ENCODE measurements at regions of chr22 and their contacts with region 1.

Region 1: GRCh38 chr22:36065775-36066559 is 37.3 kb upstream of the RBFOX2 start:
- DNase-seq: peak; percentile 73
- H3K4me3 Mint-ChIP-seq: peak overlapping the region; percentile 72
- H3K27ac Mint-ChIP-seq: peak overlapping the region; percentile 40
- H3K4me1 Mint-ChIP-seq: peaks cover 11% of the 10 kb centered on the region
- H3K27me3 Mint-ChIP-seq: peaks cover 6% of the 10 kb centered on the region

Region 2: DNA sequence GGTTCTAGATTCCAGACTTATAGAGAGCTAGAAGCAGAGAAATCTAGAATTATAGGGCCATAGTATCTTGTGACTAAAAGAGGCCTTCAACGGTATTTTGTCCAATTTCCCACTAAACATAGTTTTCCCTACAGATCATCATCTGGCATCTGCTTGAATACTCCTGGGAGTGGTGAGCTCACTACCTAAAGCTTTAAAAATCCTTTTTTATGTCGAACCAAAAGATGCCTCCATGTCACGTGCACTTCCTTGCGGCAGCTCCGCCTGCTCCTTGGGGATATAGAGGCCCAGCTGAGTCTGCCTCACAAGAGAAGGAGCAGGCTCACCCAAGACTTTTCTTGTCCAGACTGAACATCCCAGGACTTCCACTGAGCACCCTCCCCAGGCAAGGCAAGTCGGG is 444.5 kb before region 1 on chr22:
- CTCF ChIA-PET with region 1: no interaction called
- POLR2A ChIA-PET with region 1: no interaction called
- DNase-seq: no peak
- H3K4me3 Mint-ChIP-seq: no peak overlapping the region
- H3K27ac Mint-ChIP-seq: no peak overlapping the region
- H3K4me1 Mint-ChIP-seq: peaks cover 7% of the 10 kb centered on the region
- H3K27me3 Mint-ChIP-seq: peaks cover 16% of the 10 kb centered on the region

Region 3: DNA sequence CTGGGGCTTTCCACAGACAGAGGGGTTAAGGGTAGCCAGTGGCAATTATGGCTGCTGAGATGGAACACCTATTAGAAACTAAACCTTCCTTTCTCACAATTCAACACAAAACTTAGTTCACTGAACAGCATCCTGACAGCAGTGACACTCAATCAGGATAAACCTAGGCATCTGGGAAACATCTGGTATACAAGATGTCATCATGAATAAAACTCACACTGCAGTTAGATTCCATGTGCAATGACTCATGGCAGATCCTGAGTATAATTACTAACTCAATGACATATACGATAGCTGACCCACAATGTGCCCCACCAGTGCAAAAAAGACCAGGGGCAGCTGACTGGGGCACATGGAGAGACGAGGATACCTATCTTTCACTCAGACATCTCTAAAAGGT is 55.1 kb before region 1 on chr22:
- CTCF ChIA-PET with region 1: interaction called, 10 read pairs
- POLR2A ChIA-PET with region 1: no interaction called
- DNase-seq: no peak
- H3K4me3 Mint-ChIP-seq: no peak overlapping the region
- H3K27ac Mint-ChIP-seq: no peak overlapping the region
- H3K4me1 Mint-ChIP-seq: no peaks in the 10 kb centered on the region
- H3K27me3 Mint-ChIP-seq: peaks cover 18% of the 10 kb centered on the region

Region 4: DNA sequence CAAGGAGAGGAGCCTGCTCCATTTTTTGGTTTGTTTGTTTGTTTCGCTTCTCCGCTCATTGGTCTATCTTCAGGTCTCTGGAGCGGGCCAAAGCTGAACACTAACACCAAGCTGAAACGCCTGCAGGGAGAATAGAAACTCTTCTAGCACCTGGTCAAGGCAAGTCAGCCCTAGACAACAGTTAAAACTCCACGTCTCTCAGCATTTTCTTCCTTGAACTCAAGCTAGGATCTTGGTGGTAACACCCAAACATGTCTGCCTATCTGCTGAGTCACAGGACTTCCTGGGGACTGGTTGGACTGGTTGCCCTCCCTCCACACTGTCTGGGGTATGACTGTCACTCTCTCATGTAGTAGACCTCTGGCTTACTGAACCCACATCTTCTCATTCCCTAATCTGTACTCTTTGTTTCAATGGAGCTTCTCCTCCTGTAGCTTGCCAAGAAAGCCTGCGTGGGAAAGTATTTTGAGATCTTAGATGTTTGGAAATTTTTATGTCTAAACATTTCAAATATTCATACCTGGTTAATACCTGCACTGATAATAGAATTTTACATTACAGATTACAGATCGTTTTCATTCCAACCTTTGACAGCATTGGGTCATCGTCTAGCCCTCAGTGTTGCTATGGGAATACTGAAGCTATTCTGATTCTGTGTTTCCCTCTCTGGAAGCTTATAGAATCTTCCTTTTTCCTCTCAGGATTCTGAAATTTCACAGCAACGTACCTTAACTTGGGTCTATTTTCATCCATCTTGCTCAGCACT is 13.3 kb before region 1 on chr22:
- CTCF ChIA-PET with region 1: interaction called, 44 read pairs
- POLR2A ChIA-PET with region 1: interaction called, 3 read pairs
- DNase-seq: no peak
- H3K4me3 Mint-ChIP-seq: no peak overlapping the region
- H3K27ac Mint-ChIP-seq: no peak overlapping the region
- H3K4me1 Mint-ChIP-seq: peaks cover 8% of the 10 kb centered on the region
- H3K27me3 Mint-ChIP-seq: peaks cover 12% of the 10 kb centered on the region

Region 5: GRCh38 chr22:36088292-36088691 is 22.3 kb after region 1 on chr22:
- CTCF ChIA-PET with region 1: interaction called, 15 read pairs
- POLR2A ChIA-PET with region 1: no interaction called
- DNase-seq: no peak
- H3K4me3 Mint-ChIP-seq: no peak overlapping the region
- H3K27ac Mint-ChIP-seq: no peak overlapping the region
- H3K4me1 Mint-ChIP-seq: peaks cover 3% of the 10 kb centered on the region
- H3K27me3 Mint-ChIP-seq: no peaks in the 10 kb centered on the region

Region 6: DNA sequence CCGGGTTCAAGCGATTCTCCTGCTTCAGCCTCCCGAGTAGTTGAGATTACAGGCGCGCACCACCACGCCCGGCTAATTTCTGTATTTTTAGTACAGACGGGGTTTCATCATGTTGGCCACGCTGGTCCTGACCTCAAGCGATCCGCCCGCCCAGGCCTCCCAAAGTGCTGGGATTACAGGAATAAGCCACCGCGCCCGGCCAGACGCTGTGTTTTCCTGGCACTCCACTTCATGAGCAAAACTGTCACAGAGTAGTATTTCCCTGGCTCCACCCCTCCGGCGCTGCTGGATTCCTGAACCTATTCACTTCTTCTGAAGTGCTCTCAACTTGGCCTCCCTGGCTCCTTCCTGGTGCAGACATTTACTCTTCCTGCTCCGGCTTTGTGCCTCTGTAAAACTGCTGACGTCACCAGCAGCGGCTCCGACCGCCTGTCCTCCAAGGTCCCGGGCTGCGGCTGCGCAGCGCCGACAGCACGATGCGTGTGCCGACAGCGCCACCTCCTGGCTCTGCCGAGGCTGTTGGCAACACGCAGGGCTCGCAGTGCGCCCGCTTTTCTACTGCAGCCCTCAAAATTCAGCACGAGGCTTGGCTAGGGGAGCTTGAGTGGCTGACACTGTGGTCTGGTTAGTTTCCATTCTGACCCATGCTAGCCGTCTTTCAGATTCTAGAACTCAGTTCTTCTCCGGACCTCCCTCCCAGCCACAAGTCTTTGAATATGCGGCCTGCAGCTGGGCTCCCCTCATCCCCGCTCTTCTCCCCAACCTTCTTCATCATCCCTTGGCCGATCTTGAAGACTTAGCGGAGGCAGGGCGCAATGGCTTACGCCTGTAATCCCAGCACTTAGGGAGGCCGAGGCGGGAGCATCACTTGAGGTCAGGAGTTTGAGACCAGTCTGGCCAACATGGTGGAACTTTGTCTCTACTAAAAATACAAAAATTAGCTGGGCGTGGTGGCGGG is 58.0 kb after region 1 on chr22:
- CTCF ChIA-PET with region 1: interaction called, 14 read pairs
- POLR2A ChIA-PET with region 1: no interaction called
- DNase-seq: peak; percentile 94
- H3K4me3 Mint-ChIP-seq: peak overlapping the region; percentile 12
- H3K27ac Mint-ChIP-seq: peak overlapping the region; percentile 33
- H3K4me1 Mint-ChIP-seq: peaks cover 13% of the 10 kb centered on the region
- H3K27me3 Mint-ChIP-seq: peaks cover 3% of the 10 kb centered on the region

Region 7: DNA sequence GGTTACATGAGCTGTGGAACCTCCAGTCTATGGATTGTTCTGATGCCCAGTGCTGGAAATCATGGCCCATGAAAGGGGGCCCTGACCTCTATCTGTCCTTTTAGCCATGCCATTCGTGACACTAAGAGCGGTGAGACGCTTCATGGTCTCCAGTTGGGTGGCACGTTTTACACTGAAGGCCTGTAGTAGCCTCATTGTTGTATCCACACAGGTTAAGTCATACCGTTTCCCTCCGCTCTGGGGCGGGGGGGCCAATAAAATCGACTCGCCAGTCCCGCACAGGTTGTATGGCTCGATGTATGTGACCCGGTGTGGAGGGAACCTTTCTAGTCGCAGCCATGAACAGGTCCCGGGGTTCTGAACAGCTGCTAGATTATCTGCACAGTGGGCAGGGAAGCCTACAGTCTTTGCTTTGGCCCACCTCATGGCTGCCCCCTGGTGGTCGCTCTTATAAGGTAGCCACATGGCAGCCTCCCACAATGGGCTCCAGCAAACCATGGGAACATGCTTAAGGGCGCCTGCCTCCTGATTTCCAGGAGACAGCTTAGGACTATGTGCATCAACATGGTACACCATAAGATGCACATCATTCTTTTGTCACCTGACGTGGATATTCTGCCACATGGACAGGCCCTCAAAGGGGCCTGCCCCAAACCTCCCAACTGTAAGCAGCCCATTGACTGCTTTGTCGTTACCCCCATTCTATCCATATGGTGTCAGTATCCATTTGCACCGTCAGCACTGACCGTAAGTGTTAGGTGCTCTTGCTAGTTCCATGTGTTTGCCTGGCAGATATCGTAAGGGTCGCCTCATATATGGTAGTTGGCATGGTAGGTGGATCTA is 114.3 kb after region 1 on chr22:
- CTCF ChIA-PET with region 1: interaction called, 12 read pairs
- POLR2A ChIA-PET with region 1: no interaction called
- DNase-seq: peak; percentile 85
- H3K4me3 Mint-ChIP-seq: no peak overlapping the region
- H3K27ac Mint-ChIP-seq: no peak overlapping the region
- H3K4me1 Mint-ChIP-seq: peaks cover 2% of the 10 kb centered on the region
- H3K27me3 Mint-ChIP-seq: peaks cover 3% of the 10 kb centered on the region

Region 8: GRCh38 chr22:36311386-36312358 is 245.7 kb after region 1 on chr22:
- CTCF ChIA-PET with region 1: no interaction called
- POLR2A ChIA-PET with region 1: no interaction called
- DNase-seq: no peak
- H3K4me3 Mint-ChIP-seq: no peak overlapping the region
- H3K27ac Mint-ChIP-seq: no peak overlapping the region
- H3K4me1 Mint-ChIP-seq: peaks cover 5% of the 10 kb centered on the region
- H3K27me3 Mint-ChIP-seq: no peaks in the 10 kb centered on the region

Region 9: DNA sequence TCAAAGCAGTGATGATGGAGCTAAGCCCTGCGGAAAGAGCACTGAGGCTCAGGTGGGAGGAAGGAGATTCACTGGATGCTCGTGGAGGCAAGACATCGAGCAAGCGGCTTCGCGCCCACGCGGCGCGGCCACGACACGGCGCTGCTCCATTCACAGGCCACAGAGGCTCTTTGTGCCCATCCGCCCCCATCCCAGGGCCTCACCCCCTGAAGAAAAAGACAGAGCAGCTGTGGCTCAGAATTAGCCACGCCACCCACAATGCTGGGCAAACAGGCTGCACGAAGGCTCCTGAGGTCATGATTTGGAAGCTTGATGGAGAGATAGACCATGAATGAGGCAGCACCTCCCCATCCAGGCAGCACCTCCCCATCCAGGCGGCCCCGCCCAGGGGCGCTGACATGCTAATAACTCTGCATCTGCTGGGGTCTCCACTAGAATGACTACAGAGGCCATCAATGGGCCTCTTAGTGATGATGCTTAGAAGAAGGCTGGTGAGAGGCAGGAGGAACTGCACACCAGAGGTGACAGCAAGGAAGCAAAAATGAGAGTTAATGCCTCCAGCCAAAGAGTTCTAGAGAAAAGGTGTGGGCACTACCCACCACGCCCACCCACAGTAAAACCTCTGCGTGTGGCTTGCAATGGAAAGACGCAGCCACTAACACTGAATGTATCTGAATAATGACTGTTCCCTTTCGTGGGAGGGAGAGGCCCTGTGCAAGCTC is 278.3 kb after region 1 on chr22:
- CTCF ChIA-PET with region 1: no interaction called
- POLR2A ChIA-PET with region 1: no interaction called
- DNase-seq: no peak
- H3K4me3 Mint-ChIP-seq: peak overlapping the region; percentile 19
- H3K27ac Mint-ChIP-seq: peak overlapping the region; percentile 72
- H3K4me1 Mint-ChIP-seq: peaks cover 86% of the 10 kb centered on the region
- H3K27me3 Mint-ChIP-seq: no peaks in the 10 kb centered on the region

Measured in activated CD4-positive, alpha-beta memory T cell treated with anti-CD3 and anti-CD28 coated beads, Interleukin-2, amount 10 ng/mL, durations not matched to agents 7 days and 5 days (primary cell).